Naive thymus-derived CD8-positive, alpha-beta T cell (primary cell): ENCODE measurements at regions of chrX and their contacts with region 1.

Region 1: DNA sequence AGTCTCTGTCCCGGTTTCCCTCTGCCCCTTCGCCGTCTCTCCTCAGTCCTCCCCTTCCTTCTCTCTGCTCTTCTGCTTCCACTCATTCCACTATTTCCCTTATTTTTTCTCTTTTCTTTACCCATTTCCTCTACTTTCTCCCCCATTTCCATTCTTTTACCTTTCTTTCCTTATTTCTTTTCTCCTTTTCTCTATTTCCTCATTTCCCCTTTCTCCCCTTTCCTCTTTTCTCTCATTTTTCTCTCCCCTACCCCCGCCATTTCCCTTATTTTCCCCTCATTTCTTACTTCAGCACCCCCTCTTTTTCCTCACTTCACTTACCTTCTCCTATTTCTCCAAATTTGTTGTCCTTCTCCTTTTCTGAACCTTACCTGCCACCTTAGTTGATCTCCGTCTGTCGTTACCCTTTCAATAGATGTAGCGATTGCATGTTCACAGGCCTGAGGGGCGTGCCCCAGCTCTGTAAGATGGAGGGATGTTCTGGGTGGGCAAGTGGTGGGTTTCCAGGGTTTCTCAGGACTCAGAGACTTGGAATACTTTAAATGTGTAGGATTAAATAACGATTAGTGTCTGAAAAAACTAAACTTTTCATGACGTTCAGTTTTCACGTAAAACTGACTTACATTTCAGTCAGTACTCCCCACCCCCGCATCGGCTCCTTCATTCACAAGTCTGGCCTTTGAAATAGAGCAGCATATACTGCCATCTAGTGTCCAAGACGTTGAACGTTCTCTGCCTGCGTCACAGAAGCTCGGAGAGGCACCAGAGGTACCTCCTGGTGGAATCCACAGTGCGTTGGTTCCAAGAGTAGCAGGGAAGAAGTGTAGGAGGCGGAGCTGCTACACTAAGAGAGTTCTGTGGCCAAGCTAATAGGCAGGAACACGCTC is 641 bp upstream of the NCBP2L start:
- DNase-seq: peak; percentile 39 to 89 (median 76)
- ATAC-seq: peak; percentile 65 to 68
- H3K4me3 Mint-ChIP-seq: peak overlapping the region; percentile 86 to 96 (median 89)
- H3K27ac Mint-ChIP-seq: peak overlapping the region; percentile 65 to 98 (median 96)
- H3K4me1 Mint-ChIP-seq: peaks cover 13 to 27% (median 20%) of the 10 kb centered on the region in 4 donors
- H3K27me3 Mint-ChIP-seq: no peaks in the 10 kb centered on the region

Region 2: DNA sequence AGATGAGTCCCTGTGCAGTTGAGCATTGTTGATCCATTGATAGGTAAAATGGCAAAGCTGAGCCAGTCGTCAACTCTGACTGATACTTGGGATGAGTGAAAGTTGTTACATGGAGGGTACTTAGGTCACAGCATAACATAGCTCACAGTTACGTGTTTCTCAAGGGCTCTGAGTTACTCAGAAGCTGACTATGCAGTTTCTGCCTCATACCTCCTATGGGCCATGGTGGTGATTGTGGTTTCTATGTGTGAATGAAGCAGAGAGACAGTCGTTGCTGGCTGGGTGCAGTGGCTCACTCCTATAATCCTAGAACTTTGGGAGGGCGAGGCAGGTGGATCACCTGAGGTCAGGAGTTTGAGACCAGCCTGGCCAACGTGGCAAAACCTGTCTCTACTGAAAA is 296.6 kb before region 1 on chrX:
- POLR2A ChIA-PET with region 1: no interaction called
- DNase-seq: peak in 1 of 10 donors; percentile 19
- ATAC-seq: no peak
- H3K4me3 Mint-ChIP-seq: peak overlapping the region in 1 of 10 donors; percentile 54
- H3K27ac Mint-ChIP-seq: no peak overlapping the region
- H3K4me1 Mint-ChIP-seq: peaks cover 0 to 2% (median 0%) of the 10 kb centered on the region in 4 donors
- H3K27me3 Mint-ChIP-seq: peaks cover 0 to 4% (median 2%) of the 10 kb centered on the region in 5 donors

Region 3: GRCh38 chrX:107659768-107660167 is 117.1 kb before region 1 on chrX:
- POLR2A ChIA-PET with region 1: interaction called, 11 read pairs
- DNase-seq: peak in 4 of 10 donors; percentile 3 to 56 (median 48)
- ATAC-seq: peak; percentile 31 to 47
- H3K4me3 Mint-ChIP-seq: no peak overlapping the region
- H3K27ac Mint-ChIP-seq: peak overlapping the region in 1 of 10 donors; percentile 35
- H3K4me1 Mint-ChIP-seq: peaks cover 6 to 24% (median 14%) of the 10 kb centered on the region in 4 donors
- H3K27me3 Mint-ChIP-seq: no peaks in the 10 kb centered on the region

Region 4: GRCh38 chrX:107672955-107673378 is 103.9 kb before region 1 on chrX:
- POLR2A ChIA-PET with region 1: interaction called, 75 read pairs
- DNase-seq: peak; percentile 52 to 94 (median 86)
- ATAC-seq: peak; percentile 28 to 51
- H3K4me3 Mint-ChIP-seq: peak overlapping the region; percentile 70 to 94 (median 84)
- H3K27ac Mint-ChIP-seq: peak overlapping the region; percentile 91 to 100 (median 98)
- H3K4me1 Mint-ChIP-seq: peaks cover 17 to 60% (median 52%) of the 10 kb centered on the region in 4 donors
- H3K27me3 Mint-ChIP-seq: peaks cover 0 to 2% (median 0%) of the 10 kb centered on the region in 5 donors

Region 5: GRCh38 chrX:107716816-107717700 is 59.8 kb before region 1 on chrX:
- POLR2A ChIA-PET with region 1: interaction called, 90 read pairs
- DNase-seq: peak; percentile 71 to 96 (median 92)
- ATAC-seq: peak; percentile 55 to 59
- H3K4me3 Mint-ChIP-seq: peak overlapping the region; percentile 84 to 97 (median 92)
- H3K27ac Mint-ChIP-seq: peak overlapping the region; percentile 96 to 100 (median 100)
- H3K4me1 Mint-ChIP-seq: peaks cover 23 to 65% (median 58%) of the 10 kb centered on the region in 4 donors
- H3K27me3 Mint-ChIP-seq: no peaks in the 10 kb centered on the region

Region 6: DNA sequence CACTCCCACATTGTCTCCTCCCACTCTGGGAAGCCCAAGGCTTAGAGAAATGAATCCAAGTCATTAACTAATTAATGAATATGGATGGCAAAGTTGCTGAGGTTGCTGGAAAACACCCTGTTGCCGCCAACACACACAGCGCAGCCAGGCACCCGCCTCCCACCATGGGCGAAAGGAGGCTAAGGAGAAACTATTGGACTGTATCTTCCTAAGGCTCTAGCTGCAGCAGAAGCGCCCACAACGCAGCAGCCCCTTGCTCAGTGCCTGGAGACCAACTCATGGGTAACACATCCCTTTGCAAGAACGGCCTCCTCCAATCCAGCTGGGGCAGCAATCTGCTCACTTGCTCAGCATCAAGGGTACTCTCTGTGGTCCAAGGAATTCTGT is 35.5 kb before region 1 on chrX:
- POLR2A ChIA-PET with region 1: interaction called, 56 read pairs
- DNase-seq: no peak
- ATAC-seq: peak; percentile 13 to 23
- H3K4me3 Mint-ChIP-seq: peak overlapping the region; percentile 75 to 93 (median 84)
- H3K27ac Mint-ChIP-seq: peak overlapping the region; percentile 96 to 100 (median 98)
- H3K4me1 Mint-ChIP-seq: peaks cover 20 to 55% (median 45%) of the 10 kb centered on the region in 4 donors
- H3K27me3 Mint-ChIP-seq: peaks cover 0 to 4% (median 0%) of the 10 kb centered on the region in 5 donors

Region 7: DNA sequence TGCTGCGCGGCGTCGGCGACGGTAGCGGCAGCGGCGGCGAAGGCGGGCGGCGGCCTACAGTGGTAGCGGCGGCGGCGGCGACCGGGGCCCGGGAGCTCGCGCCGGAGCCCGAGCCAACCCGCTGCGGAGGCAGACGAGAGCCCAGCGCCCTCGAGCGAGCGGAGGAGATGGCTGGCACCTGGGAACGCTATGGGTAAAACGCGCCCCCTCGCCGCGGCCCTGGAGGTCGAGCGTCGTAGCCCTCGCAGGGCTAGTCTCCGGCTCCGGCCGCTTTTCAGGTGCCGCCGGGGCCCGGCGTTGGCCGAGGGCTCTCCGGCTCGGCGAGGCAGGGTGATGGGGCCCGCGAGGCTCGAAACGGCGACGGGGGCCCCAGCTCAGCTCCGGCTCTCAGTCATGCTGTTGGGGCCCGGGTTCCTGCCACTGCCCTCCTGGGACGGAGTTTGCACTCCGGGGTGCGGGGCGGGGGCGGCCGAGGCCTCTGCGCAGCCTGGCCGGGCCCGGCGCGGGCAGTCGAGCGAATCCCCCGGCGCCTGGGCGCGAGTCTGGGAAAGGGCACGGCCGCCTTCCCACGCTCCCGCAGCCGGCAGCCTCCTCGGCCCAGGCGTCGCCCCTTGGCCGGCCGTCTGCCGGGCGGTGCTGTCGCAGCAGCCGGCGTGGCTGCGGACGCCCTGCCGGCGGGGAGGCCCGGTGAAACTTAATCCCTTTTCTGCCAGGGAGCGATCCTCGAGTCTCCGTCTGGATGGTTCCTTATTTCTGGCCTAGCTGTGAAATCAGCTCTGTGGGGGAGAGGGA is 49.5 kb after region 1 on chrX:
- POLR2A ChIA-PET with region 1: interaction called, 13 read pairs
- DNase-seq: peak in 8 of 10 donors; percentile 16 to 67 (median 38)
- ATAC-seq: peak; percentile 69 to 82
- H3K4me3 Mint-ChIP-seq: peak overlapping the region; percentile 79 to 93 (median 90)
- H3K27ac Mint-ChIP-seq: peak overlapping the region; percentile 58 to 95 (median 87)
- H3K4me1 Mint-ChIP-seq: peaks cover 16 to 55% (median 48%) of the 10 kb centered on the region in 4 donors
- H3K27me3 Mint-ChIP-seq: peaks cover 0 to 4% (median 0%) of the 10 kb centered on the region in 5 donors